ENCODE measurements at regions of chr10 and their contacts with region 1.

Region 1: GRCh38 chr10:61284222-61284890 is 168.8 kb downstream of the TMEM26 start:
- DNase-seq: no peak
- ATAC-seq: peak; percentile 79 to 95 (median 87)
- H3K4me3 ChIP-seq: no peak overlapping the region
- H3K27ac ChIP-seq: no peak overlapping the region
- H3K4me1 ChIP-seq: peaks cover 0 to 5% (median 0%) of the 10 kb centered on the region in 3 donors
- H3K27me3 ChIP-seq: no peaks in the 10 kb centered on the region
- CTCF ChIP-seq: peak; percentile 33 to 78 (median 64)

Region 2: GRCh38 chr10:60816628-60817397 is 467.5 kb before region 1 on chr10:
- intact Hi-C with region 1: loop called in 2 of 3 experiments (anchors 10 kb)
- DNase-seq: peak in 3 of 6 donors; percentile 32 to 51 (median 39)
- ATAC-seq: peak; percentile 91 to 98 (median 97)
- H3K4me3 ChIP-seq: no peak overlapping the region
- H3K27ac ChIP-seq: no peak overlapping the region
- H3K4me1 ChIP-seq: peaks cover 0 to 5% (median 0%) of the 10 kb centered on the region in 3 donors
- H3K27me3 ChIP-seq: no peaks in the 10 kb centered on the region
- CTCF ChIP-seq: peak; percentile 28 to 76 (median 70)

Region 3: GRCh38 chr10:61135276-61135721 is 149.1 kb before region 1 on chr10:
- intact Hi-C with region 1: loop called (anchors 10 kb)
- DNase-seq: peak in 1 of 6 donors; percentile 18
- ATAC-seq: peak in 1 of 4 donors; percentile 63
- H3K4me3 ChIP-seq: no peak overlapping the region
- H3K27ac ChIP-seq: no peak overlapping the region
- H3K4me1 ChIP-seq: no peaks in the 10 kb centered on the region
- H3K27me3 ChIP-seq: no peaks in the 10 kb centered on the region
- CTCF ChIP-seq: no peak